Vagina (tissue), 2 donors: ENCODE measurements at regions of chr11 and their contacts with region 1.

Region 1: DNA sequence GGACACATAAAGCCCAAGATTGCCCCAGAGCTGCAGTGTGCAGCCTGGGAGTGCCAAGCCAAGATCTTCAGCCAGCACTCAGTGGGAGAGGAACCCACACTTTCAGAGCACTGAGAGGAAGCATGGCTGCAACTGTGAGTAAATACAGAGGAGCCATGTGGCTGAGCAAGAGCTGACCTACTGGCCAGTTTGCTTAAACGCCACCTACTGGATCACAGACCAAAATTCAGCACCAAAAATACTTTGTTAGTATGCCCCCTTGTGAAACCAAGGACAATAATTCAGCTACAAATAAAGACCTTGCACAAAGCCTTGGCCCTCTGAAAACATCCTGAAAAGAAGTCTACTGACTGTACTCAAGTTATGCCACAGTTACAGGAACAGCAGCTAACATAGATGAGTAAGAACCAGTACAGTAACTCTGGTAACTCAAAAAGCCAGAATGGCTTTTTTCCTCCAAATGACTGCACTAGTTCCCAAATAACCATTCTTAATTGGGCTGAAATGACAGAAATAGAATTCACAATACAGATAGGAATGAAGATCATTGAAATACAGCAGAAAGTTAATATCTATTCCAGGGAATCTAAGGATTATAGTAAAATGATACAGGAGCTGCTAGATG is 10.1 kb upstream of the OR4A15 start:
- DNase-seq: no peak
- H3K4me3 ChIP-seq: no peak overlapping the region
- H3K27ac ChIP-seq: no peak overlapping the region
- H3K4me1 ChIP-seq: no peaks in the 10 kb centered on the region
- H3K27me3 ChIP-seq: no peaks in the 10 kb centered on the region
- CTCF ChIP-seq: no peak
- POLR2A ChIP-seq: no peak

Region 2: DNA sequence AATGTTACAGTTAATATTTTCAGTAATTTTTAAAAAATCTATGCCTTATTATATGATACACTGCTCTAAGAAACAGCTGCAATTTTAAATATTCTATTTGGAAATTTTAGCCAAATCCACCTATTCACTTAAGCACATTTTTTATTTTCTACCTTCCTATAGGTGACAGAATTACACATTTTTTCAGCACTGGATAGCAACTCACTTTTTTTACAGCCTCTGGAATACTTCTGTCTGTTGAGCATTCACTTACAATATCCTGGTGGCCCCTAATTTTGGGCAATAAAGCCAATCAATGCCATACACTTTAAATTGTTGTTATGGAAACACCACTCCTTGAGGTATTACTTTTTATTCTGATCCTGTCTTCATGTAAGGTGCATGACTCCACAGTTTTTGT is 32.5 kb after region 1 on chr11:
- intact Hi-C with region 1: loop called (anchors 1 kb)
- DNase-seq: no peak
- H3K4me3 ChIP-seq: no peak overlapping the region
- H3K27ac ChIP-seq: no peak overlapping the region
- H3K4me1 ChIP-seq: no peaks in the 10 kb centered on the region
- H3K27me3 ChIP-seq: no peaks in the 10 kb centered on the region
- CTCF ChIP-seq: no peak
- POLR2A ChIP-seq: no peak